ENCODE measurements at regions of chr5 and their contacts with region 1.

Region 1: GRCh38 chr5:134041570-134042411 is 37.0 kb upstream of the VDAC1 start:
- DNase-seq: no peak
- H3K4me3 ChIP-seq: no peak overlapping the region
- H3K27ac ChIP-seq: no peak overlapping the region
- H3K4me1 ChIP-seq: no peaks in the 10 kb centered on the region
- H3K27me3 ChIP-seq: no peaks in the 10 kb centered on the region
- CTCF ChIP-seq: no peak

Region 2: DNA sequence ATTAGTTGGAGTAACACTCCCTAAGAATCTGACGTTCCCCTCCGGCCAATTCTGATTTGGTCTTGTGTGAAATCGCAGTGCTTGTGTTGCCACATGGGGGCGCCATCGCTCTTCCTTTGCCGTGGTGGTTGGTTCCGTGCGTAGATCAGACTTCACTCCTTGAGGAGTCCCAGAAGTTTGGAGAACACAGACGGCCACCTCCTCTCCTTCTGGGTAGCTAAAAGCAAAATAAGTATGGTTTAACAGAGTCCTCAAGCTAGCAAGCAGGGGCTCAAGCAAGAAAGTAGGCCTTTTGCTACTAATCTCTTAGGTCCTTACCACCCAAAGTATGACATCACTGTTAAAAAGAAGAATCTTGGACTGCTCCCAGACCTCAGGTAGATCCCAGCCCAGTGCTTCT is 930.5 kb before region 1 on chr5:
- CTCF ChIA-PET with region 1: no interaction called
- POLR2A ChIA-PET with region 1: no interaction called
- intact Hi-C with region 1: loop called (anchors 2 kb)
- DNase-seq: peak; percentile 84
- H3K4me3 ChIP-seq: no peak overlapping the region
- H3K27ac ChIP-seq: no peak overlapping the region
- H3K4me1 ChIP-seq: no peaks in the 10 kb centered on the region
- H3K27me3 ChIP-seq: no peaks in the 10 kb centered on the region
- CTCF ChIP-seq: peak; percentile 98

Region 3: DNA sequence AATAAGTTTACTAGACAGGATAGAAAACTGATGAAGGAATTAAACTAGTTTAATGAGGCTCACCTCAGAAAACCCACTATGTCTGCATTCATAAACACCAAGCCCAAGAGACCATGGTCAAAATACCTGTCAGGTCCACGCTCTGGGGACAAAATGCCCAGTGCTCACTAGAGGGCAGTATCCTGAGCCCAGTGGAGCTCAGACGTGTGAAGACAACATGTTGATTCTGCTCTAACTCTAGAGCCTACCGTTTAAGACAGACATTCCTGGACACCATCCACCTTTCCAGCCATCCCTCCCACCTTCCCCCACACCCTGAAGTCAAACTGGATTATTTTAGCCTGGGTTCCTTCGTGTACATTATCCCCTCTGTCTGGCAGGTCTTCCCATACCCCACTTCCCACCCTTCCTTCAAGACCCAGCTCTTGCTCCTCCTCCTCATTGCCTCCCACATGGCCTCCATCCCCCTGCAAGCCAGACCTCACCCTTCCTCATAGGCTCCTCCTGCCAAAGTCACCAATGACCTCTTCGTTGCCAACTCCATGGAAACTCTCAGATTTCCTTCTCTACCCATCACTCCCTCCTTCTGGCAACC is 287.1 kb before region 1 on chr5:
- CTCF ChIA-PET with region 1: no interaction called
- POLR2A ChIA-PET with region 1: no interaction called
- intact Hi-C with region 1: no loop called
- DNase-seq: peak; percentile 41
- H3K4me3 ChIP-seq: no peak overlapping the region
- H3K27ac ChIP-seq: no peak overlapping the region
- H3K4me1 ChIP-seq: no peaks in the 10 kb centered on the region
- H3K27me3 ChIP-seq: no peaks in the 10 kb centered on the region
- CTCF ChIP-seq: peak; percentile 77

Region 4: GRCh38 chr5:133794781-133795415 is 246.9 kb before region 1 on chr5:
- CTCF ChIA-PET with region 1: no interaction called
- POLR2A ChIA-PET with region 1: no interaction called
- intact Hi-C with region 1: no loop called
- DNase-seq: no peak
- H3K4me3 ChIP-seq: no peak overlapping the region
- H3K27ac ChIP-seq: no peak overlapping the region
- H3K4me1 ChIP-seq: no peaks in the 10 kb centered on the region
- H3K27me3 ChIP-seq: no peaks in the 10 kb centered on the region
- CTCF ChIP-seq: no peak

Region 5: GRCh38 chr5:134026521-134027268 is 15.1 kb before region 1 on chr5:
- CTCF ChIA-PET with region 1: interaction called, 13 read pairs
- POLR2A ChIA-PET with region 1: interaction called, 9 read pairs
- intact Hi-C with region 1: no loop called
- DNase-seq: peak; percentile 81
- H3K4me3 ChIP-seq: no peak overlapping the region
- H3K27ac ChIP-seq: no peak overlapping the region
- H3K4me1 ChIP-seq: no peaks in the 10 kb centered on the region
- H3K27me3 ChIP-seq: no peaks in the 10 kb centered on the region
- CTCF ChIP-seq: peak; percentile 71

Region 6: DNA sequence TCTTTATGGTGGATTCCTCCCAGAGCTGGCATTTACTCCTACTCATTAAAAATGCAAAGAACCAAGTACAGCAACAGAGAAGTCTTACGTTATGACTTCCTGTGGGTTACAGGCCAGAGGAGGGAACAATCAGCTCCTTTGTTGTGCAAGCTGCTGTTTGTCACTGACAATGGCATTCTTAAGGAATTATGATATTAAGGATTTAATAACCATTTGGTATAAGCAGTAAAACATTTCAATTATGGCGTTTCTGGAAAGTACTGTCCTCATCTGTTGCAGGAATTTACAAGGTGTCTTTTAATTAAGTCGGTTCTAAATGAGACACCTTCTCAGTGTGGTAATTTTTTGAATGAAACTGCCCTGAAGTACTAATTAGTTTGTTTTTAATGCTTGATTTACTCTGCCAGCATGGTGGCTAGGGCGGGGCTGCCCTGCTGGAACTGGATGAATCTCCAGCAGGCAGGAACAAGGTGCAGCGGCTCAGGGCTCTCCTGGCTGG is 12.1 kb after region 1 on chr5:
- CTCF ChIA-PET with region 1: interaction called, 13 read pairs
- POLR2A ChIA-PET with region 1: no interaction called
- intact Hi-C with region 1: no loop called
- DNase-seq: peak; percentile 93
- H3K4me3 ChIP-seq: no peak overlapping the region
- H3K27ac ChIP-seq: peak overlapping the region; percentile 25
- H3K4me1 ChIP-seq: peaks cover 17% of the 10 kb centered on the region
- H3K27me3 ChIP-seq: no peaks in the 10 kb centered on the region
- CTCF ChIP-seq: no peak

Region 7: DNA sequence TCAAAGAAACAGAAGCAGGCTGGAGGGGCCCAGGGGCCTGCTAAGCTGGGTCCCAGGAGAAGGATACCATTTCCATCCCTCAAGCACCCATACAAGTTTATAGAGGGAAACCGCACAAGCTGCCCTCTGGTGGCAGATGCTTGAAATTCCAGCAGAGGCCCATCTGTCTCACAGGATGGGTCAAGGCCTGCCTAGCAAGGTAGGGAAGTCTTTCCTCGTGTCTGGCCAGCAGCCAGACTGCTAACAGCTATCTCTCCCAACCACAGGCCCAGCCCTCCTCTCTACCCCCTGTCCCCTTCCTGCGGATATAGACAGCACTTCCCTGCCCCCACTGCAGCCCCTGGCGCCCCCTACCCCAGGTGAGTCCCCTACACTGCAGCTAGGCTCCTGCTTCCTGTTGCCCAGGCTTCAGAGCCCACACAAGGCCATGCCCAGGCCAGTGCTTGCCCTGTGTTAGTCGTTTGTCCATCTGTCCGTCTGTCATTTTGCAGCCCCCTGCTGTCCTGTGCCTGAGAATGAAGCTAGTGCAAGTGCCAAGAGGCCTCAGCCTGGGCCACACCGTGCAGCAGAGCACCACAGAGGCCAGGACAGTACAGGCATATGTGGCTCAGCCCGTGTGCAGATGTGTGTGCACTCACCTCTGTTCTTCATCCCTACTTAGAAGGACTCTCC is 98.9 kb after region 1 on chr5:
- CTCF ChIA-PET with region 1: interaction called, 87 read pairs
- POLR2A ChIA-PET with region 1: no interaction called
- intact Hi-C with region 1: loop called (anchors 1 kb)
- DNase-seq: peak; percentile 81
- H3K4me3 ChIP-seq: no peak overlapping the region
- H3K27ac ChIP-seq: no peak overlapping the region
- H3K4me1 ChIP-seq: peaks cover 7% of the 10 kb centered on the region
- H3K27me3 ChIP-seq: no peaks in the 10 kb centered on the region
- CTCF ChIP-seq: peak; percentile 85

Region 8: DNA sequence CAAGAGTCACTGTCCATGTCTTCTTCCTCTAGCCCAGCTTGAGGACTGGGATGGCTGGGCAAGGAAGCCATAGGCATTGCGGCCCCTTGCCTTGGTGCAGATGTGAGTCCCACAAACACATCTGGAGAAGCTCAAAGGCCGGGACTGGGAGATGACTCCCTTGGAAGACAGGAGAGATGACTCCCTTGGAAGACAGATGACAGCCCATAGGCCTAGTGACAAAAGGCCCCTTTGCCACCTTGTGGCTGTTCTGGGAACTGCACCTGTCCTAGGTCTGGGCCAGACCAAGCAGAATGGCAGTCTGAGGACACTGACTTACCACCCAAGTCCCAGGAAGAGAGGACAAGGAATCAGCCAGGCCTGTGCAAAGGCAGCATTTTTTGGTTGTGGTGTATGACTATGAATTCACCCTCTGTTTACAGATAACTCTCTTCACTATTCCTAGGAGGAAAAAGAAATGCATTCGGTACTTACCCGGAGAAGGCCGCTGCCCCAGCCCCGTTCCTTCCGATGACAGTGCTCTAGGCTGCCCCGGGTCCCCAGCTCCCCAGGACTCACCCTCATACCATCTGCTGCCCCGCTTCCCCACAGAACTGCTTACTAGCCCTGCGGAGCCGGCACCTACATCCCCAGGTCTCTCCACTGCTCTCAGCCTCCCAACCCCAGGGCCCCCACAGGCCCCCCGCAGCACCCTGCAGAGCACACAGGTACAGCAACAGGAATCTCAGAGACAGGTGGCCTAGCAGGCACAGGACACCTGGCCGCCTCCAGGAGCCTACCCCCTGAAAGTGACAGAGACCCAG is 104.2 kb after region 1 on chr5:
- CTCF ChIA-PET with region 1: interaction called, 87 read pairs
- POLR2A ChIA-PET with region 1: no interaction called
- intact Hi-C with region 1: loop called (anchors 1 kb)
- DNase-seq: peak; percentile 79
- H3K4me3 ChIP-seq: no peak overlapping the region
- H3K27ac ChIP-seq: no peak overlapping the region
- H3K4me1 ChIP-seq: no peaks in the 10 kb centered on the region
- H3K27me3 ChIP-seq: no peaks in the 10 kb centered on the region
- CTCF ChIP-seq: peak; percentile 91

Region 9: GRCh38 chr5:134289509-134290113 is 247.8 kb after region 1 on chr5:
- CTCF ChIA-PET with region 1: interaction called, 5 read pairs
- POLR2A ChIA-PET with region 1: no interaction called
- intact Hi-C with region 1: loop called (anchors 10 kb)
- DNase-seq: peak; percentile 38
- H3K4me3 ChIP-seq: no peak overlapping the region
- H3K27ac ChIP-seq: no peak overlapping the region
- H3K4me1 ChIP-seq: no peaks in the 10 kb centered on the region
- H3K27me3 ChIP-seq: no peaks in the 10 kb centered on the region
- CTCF ChIP-seq: peak; percentile 69

Region 10: GRCh38 chr5:134394932-134395331 is 353.1 kb after region 1 on chr5:
- CTCF ChIA-PET with region 1: no interaction called
- POLR2A ChIA-PET with region 1: no interaction called
- intact Hi-C with region 1: no loop called
- DNase-seq: no peak
- H3K4me3 ChIP-seq: no peak overlapping the region
- H3K27ac ChIP-seq: no peak overlapping the region
- H3K4me1 ChIP-seq: no peaks in the 10 kb centered on the region
- H3K27me3 ChIP-seq: no peaks in the 10 kb centered on the region
- CTCF ChIP-seq: no peak

Region 11: GRCh38 chr5:134758504-134759341 is 716.9 kb after region 1 on chr5 and contains the start of gene DDX46:
- CTCF ChIA-PET with region 1: no interaction called
- POLR2A ChIA-PET with region 1: no interaction called
- intact Hi-C with region 1: no loop called
- DNase-seq: peak; percentile 97
- H3K4me3 ChIP-seq: peak within 1 kb of the TSS; percentile 96
- H3K27ac ChIP-seq: peak within 1 kb of the TSS; percentile 89
- H3K4me1 ChIP-seq: peaks cover 8% of the 10 kb centered on the region
- H3K27me3 ChIP-seq: no peaks in the 10 kb centered on the region
- CTCF ChIP-seq: peak; percentile 94
- total RNA-seq, gene DDX46: 110 and 128 TPM in 2 replicates